ENCODE measurements at regions of chr19 and their contacts with region 1.

Region 1: GRCh38 chr19:10580979-10581631 is 6.0 kb downstream of the AP1M2 start:
- DNase-seq: peak; percentile 90 to 94
- H3K4me3 ChIP-seq: no peak overlapping the region
- H3K27ac ChIP-seq: no peak overlapping the region
- H3K4me1 ChIP-seq: no peaks in the 10 kb centered on the region; a peak in 1 of 7 replicates
- H3K27me3 ChIP-seq: no peaks in the 10 kb centered on the region
- CTCF ChIP-seq: peak; percentile 84 to 100 (median 97)
- EP300 ChIP-seq: no peak
- POLR2A ChIP-seq: no peak
- RAD21 ChIP-seq: peak; percentile 96 to 97

Region 2: DNA sequence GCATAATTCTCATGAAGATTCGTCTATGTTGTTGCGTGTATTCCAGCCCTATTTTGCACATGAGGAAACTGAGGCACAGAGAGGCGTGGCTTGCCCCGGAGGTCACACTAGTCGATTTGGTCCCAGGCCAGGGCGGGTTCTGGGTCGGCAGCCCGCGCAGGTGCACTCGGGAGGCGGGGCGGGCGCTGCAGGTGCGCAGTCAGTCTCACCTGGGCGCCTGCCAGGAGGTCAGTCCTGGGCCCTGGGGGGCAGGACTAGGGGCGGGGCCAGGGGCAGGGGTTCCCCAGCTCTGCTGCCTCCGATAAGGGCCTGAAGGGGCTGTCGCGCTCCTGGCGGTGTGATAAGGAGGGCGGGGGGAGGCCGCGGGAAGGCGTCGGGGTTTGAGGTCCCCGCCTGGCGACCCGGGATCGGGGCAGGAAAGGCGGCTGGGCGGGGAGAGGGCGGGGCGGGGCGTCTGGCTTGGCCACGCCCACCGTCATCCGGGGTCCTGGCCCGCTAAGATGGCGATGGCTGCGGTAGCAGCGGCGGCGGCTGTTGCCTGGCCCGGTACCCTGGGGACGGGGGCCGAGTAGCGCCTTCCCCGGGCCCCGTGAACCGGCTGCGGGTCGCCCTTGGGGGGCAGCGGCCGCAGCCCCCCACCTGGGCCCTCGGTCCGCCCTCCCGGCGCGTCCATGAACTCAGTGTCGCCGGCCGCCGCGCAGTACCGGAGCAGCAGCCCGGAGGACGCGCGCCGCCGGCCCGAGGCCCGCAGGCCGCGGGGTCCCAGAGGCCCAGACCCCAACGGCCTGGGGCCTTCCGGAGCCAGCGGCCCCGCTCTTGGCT is 37.5 kb before region 1 on chr19 and contains the start of gene ATG4D:
- CTCF ChIA-PET with region 1: interaction called, 17 read pairs
- POLR2A ChIA-PET with region 1: interaction called, 3 read pairs
- DNase-seq: peak; percentile 82 to 91
- H3K4me3 ChIP-seq: peak within 1 kb of the TSS; percentile 57 to 99 (median 88)
- H3K27ac ChIP-seq: peak within 1 kb of the TSS; percentile 2; the same call in 1 of the 2 replicates
- H3K4me1 ChIP-seq: peaks cover 0 to 4% (median 3%) of the 10 kb centered on the region in 4 experiments; a peak in 4 of 7 replicates
- H3K27me3 ChIP-seq: no peaks in the 10 kb centered on the region
- CTCF ChIP-seq: peak in 1 of 3 experiments; percentile 20; a peak in 1 of 4 replicates
- EP300 ChIP-seq: no peak
- POLR2A ChIP-seq: peak; percentile 68 to 88
- RAD21 ChIP-seq: no peak
- total RNA-seq, gene ATG4D: 43.7 and 51.4 TPM in 2 replicates

Region 3: GRCh38 chr19:10593820-10594637 is 12.9 kb after region 1 on chr19:
- CTCF ChIA-PET with region 1: interaction called, 46 read pairs
- POLR2A ChIA-PET with region 1: interaction called, 5 read pairs
- DNase-seq: no peak
- H3K4me3 ChIP-seq: no peak overlapping the region
- H3K27ac ChIP-seq: no peak overlapping the region
- H3K4me1 ChIP-seq: no peaks in the 10 kb centered on the region
- H3K27me3 ChIP-seq: no peaks in the 10 kb centered on the region
- CTCF ChIP-seq: no peak
- EP300 ChIP-seq: no peak
- POLR2A ChIP-seq: no peak
- RAD21 ChIP-seq: no peak

Region 4: GRCh38 chr19:10625003-10625776 is 44.1 kb after region 1 on chr19 and contains the start of gene SLC44A2:
- CTCF ChIA-PET with region 1: interaction called, 46 read pairs
- POLR2A ChIA-PET with region 1: interaction called, 11 read pairs
- DNase-seq: peak in 1 of 2 experiments; percentile 90
- H3K4me3 ChIP-seq: peak within 1 kb of the TSS; percentile 84 to 92 (median 87)
- H3K27ac ChIP-seq: peak within 1 kb of the TSS; percentile 83
- H3K4me1 ChIP-seq: peaks cover 4 to 9% (median 8%) of the 10 kb centered on the region in 4 experiments
- H3K27me3 ChIP-seq: no peaks in the 10 kb centered on the region
- CTCF ChIP-seq: peak in 1 of 3 experiments; percentile 8; a peak in 1 of 4 replicates
- EP300 ChIP-seq: peak in 1 of 2 experiments; percentile 84; a peak in 1 of 3 replicates
- POLR2A ChIP-seq: peak; percentile 62 to 98
- RAD21 ChIP-seq: peak in 1 of 2 experiments; percentile 6; a peak in 1 of 4 replicates
- total RNA-seq, gene SLC44A2: 118 and 120 TPM in 2 replicates

Region 5: GRCh38 chr19:10653715-10654492 is 72.8 kb after region 1 on chr19 and contains the start of gene ILF3:
- CTCF ChIA-PET with region 1: interaction called, 267 read pairs
- POLR2A ChIA-PET with region 1: interaction called, 22 read pairs
- DNase-seq: peak; percentile 97 to 100
- H3K4me3 ChIP-seq: peak within 1 kb of the TSS; percentile 99 to 100 (median 100)
- H3K27ac ChIP-seq: peak within 1 kb of the TSS; percentile 98
- H3K4me1 ChIP-seq: 0 out of 7 replicates have a peak, but pooled peaks cover 0 to 2% (median 0%) of the 10 kb centered on the region in 4 experiments
- H3K27me3 ChIP-seq: no peaks in the 10 kb centered on the region
- CTCF ChIP-seq: no peak
- EP300 ChIP-seq: peak in 1 of 2 experiments; percentile 48; a peak in 1 of 3 replicates
- POLR2A ChIP-seq: peak; percentile 69 to 89
- RAD21 ChIP-seq: no peak
- total RNA-seq, gene ILF3: 675 and 695 TPM in 2 replicates

Region 6: GRCh38 chr19:10690341-10690781 is 109.3 kb after region 1 on chr19:
- CTCF ChIA-PET with region 1: interaction called, 64 read pairs
- POLR2A ChIA-PET with region 1: interaction called, 7 read pairs
- DNase-seq: no peak
- H3K4me3 ChIP-seq: no peak overlapping the region
- H3K27ac ChIP-seq: no peak overlapping the region
- H3K4me1 ChIP-seq: peaks cover 0 to 6% (median 1%) of the 10 kb centered on the region in 4 experiments; a peak in 4 of 7 replicates
- H3K27me3 ChIP-seq: no peaks in the 10 kb centered on the region
- CTCF ChIP-seq: no peak
- EP300 ChIP-seq: no peak
- POLR2A ChIP-seq: no peak
- RAD21 ChIP-seq: no peak